Activated CD4-positive, alpha-beta T cell treated with anti-CD3 and anti-CD28 coated beads for 36 hours (primary cell): ENCODE measurements at regions of chr20 and their contacts with region 1.

Region 1: GRCh38 chr20:2101865-2102584 is 398 bp downstream of the STK35 start:
- DNase-seq: peak; percentile 93
- ATAC-seq: peak; percentile 83
- H3K4me3 Mint-ChIP-seq: peak overlapping the region; percentile 81
- H3K27ac Mint-ChIP-seq: peak overlapping the region; percentile 100
- H3K4me1 Mint-ChIP-seq: peaks cover 37% of the 10 kb centered on the region
- H3K27me3 Mint-ChIP-seq: no peaks in the 10 kb centered on the region

Region 2: GRCh38 chr20:407133-407952 is 1694.7 kb before region 1 on chr20:
- CTCF ChIA-PET with region 1: no interaction called
- POLR2A ChIA-PET with region 1: no interaction called
- intact Hi-C with region 1: loop called in 1 of 2 experiments (anchors 5 kb)
- DNase-seq: peak; percentile 87
- ATAC-seq: peak; percentile 74
- H3K4me3 Mint-ChIP-seq: peak overlapping the region; percentile 78
- H3K27ac Mint-ChIP-seq: peak overlapping the region; percentile 87
- H3K4me1 Mint-ChIP-seq: peaks cover 43% of the 10 kb centered on the region
- H3K27me3 Mint-ChIP-seq: no peaks in the 10 kb centered on the region

Region 3: GRCh38 chr20:1325173-1326030 is 776.6 kb before region 1 on chr20:
- CTCF ChIA-PET with region 1: no interaction called
- POLR2A ChIA-PET with region 1: no interaction called
- intact Hi-C with region 1: loop called in 1 of 2 experiments (anchors 1 kb)
- DNase-seq: peak; percentile 99
- ATAC-seq: peak; percentile 83
- H3K4me3 Mint-ChIP-seq: no peak overlapping the region
- H3K27ac Mint-ChIP-seq: no peak overlapping the region
- H3K4me1 Mint-ChIP-seq: peaks cover 28% of the 10 kb centered on the region
- H3K27me3 Mint-ChIP-seq: no peaks in the 10 kb centered on the region

Region 4: GRCh38 chr20:1663917-1664316 is 438.1 kb before region 1 on chr20:
- CTCF ChIA-PET with region 1: no interaction called
- POLR2A ChIA-PET with region 1: no interaction called
- intact Hi-C with region 1: loop called in 1 of 2 experiments (anchors 5 kb)
- DNase-seq: peak; percentile 46
- ATAC-seq: peak; percentile 55
- H3K4me3 Mint-ChIP-seq: peak overlapping the region; percentile 47
- H3K27ac Mint-ChIP-seq: peak overlapping the region; percentile 98
- H3K4me1 Mint-ChIP-seq: peaks cover 96% of the 10 kb centered on the region
- H3K27me3 Mint-ChIP-seq: no peaks in the 10 kb centered on the region

Region 5: GRCh38 chr20:2172305-2173175 is 70.5 kb after region 1 on chr20:
- CTCF ChIA-PET with region 1: interaction called, 4 read pairs
- POLR2A ChIA-PET with region 1: interaction called, 3 read pairs
- intact Hi-C with region 1: loop called in 1 of 2 experiments (anchors 2 kb)
- DNase-seq: peak; percentile 82
- ATAC-seq: peak; percentile 72
- H3K4me3 Mint-ChIP-seq: peak overlapping the region; percentile 2
- H3K27ac Mint-ChIP-seq: no peak overlapping the region
- H3K4me1 Mint-ChIP-seq: peaks cover 2% of the 10 kb centered on the region
- H3K27me3 Mint-ChIP-seq: peaks cover 11% of the 10 kb centered on the region

Region 6: DNA sequence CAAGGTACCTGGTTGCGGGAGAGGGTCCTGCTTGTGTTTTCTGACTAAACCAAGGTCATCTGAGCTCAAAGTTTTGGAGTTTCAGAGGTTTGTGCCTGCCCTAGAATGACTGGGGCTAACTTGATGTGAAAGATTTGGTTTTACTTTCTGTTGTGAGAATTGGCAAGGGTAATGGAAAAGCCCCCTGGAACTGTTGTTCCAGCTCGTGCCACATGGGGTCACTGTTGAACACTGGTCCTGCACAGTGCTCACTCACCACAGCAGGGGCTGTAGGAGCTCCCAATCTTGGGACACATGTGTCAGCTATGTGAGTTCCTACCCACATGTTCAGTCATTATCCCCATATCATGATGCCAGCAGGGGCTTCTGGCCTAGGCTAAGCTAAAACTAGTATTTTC is 285.2 kb after region 1 on chr20:
- CTCF ChIA-PET with region 1: no interaction called
- POLR2A ChIA-PET with region 1: no interaction called
- intact Hi-C with region 1: no loop called
- DNase-seq: peak; percentile 82
- ATAC-seq: peak; percentile 90
- H3K4me3 Mint-ChIP-seq: no peak overlapping the region
- H3K27ac Mint-ChIP-seq: no peak overlapping the region
- H3K4me1 Mint-ChIP-seq: peaks cover 3% of the 10 kb centered on the region
- H3K27me3 Mint-ChIP-seq: peaks cover 10% of the 10 kb centered on the region

Region 7: DNA sequence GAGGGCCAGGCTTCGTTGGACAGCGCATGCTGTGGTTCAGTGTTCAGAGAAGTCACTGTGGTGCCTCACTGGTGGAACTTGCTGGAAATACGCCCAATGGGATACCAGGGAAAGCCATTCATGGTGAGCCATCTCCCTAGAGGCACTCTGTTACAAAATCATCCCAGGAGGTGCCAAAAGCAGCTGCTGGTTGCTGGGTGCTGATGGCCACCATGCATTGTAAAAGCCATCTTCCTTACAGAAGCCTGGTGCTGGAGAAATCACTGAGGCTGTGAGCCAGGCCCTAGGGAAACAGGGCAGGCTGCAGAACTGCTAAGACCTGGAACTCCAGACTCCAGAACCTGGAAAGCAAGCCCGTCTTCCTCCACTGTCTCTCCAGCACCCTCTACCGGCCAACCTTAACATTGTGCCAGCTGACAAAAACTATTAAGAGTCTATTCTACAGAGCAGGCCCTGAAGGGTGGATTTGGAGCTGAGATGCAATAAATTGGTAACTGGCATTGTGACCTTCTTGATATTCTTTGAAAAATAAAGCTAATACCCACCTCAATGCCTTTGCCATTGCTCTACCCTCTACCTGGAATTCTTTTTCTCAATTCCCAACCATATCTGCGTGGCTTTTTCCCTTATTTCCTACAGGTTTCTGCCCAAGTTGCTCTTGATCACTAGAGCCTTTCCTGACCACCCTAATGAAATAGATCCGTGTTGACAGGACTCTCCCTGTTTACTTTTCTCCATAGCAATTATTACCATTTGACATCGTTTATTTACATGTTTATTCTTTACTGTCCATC is 350.1 kb after region 1 on chr20:
- CTCF ChIA-PET with region 1: no interaction called
- POLR2A ChIA-PET with region 1: no interaction called
- intact Hi-C with region 1: loop called in 1 of 2 experiments (anchors 5 kb)
- DNase-seq: peak; percentile 85
- ATAC-seq: peak; percentile 58
- H3K4me3 Mint-ChIP-seq: no peak overlapping the region
- H3K27ac Mint-ChIP-seq: no peak overlapping the region
- H3K4me1 Mint-ChIP-seq: peaks cover 45% of the 10 kb centered on the region
- H3K27me3 Mint-ChIP-seq: no peaks in the 10 kb centered on the region

Region 8: DNA sequence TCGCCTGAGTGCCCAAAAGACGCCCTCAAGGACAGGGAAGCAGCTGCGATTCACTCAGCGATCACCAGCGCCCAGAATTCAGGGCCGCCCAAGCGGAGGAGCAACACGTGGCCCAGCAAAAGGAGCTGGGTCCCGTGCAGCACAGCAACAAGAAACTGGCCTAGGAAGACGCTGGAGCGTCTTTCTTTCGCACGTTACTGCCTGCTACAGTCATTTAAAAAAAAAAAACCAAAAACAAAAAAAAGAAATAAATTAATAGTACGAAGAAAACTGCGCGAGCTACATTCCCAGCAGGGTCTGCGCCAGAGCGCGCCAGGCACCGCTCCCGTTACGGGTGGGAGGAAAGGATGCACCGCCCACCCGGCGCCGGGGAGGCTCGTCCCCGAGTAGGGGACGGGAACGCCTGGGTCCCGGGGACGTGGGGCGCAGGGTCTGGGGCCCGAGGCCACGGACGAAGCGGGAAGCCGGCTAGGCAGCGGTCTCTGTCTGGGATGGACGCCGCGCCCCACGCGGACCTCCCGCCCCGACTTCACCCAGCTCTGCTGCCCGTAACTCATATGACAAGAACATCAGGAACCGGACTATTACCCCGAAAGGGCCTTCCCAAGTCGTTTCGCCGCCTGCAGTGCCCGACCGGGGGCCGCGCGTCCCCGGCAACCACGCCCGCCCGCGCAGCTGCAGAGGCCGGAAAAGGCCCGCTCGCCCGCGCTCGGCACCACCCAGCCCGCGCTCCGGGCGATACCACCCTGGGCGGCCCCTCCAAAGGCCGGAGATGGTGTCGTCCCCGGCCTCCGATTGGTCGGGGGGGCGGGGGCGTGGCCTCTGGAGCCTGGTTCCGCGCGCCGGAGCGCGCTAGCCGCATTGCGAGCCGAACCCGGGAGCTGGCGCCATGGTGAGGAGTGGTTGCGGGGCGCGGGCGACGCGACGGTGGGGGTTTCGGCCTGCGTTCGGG is 550.0 kb after region 1 on chr20 and contains the start of gene NOP56:
- CTCF ChIA-PET with region 1: no interaction called
- POLR2A ChIA-PET with region 1: no interaction called
- intact Hi-C with region 1: loop called in 1 of 2 experiments (anchors 1 kb)
- DNase-seq: peak; percentile 95
- ATAC-seq: peak; percentile 84
- H3K4me3 Mint-ChIP-seq: peak within 1 kb of the TSS; percentile 87
- H3K27ac Mint-ChIP-seq: peak within 1 kb of the TSS; percentile 90
- H3K4me1 Mint-ChIP-seq: peaks cover 40% of the 10 kb centered on the region
- H3K27me3 Mint-ChIP-seq: no peaks in the 10 kb centered on the region
- total RNA-seq, gene NOP56: 504 to 532 TPM

Region 9: GRCh38 chr20:3068986-3069900 is 967.2 kb after region 1 on chr20:
- CTCF ChIA-PET with region 1: no interaction called
- POLR2A ChIA-PET with region 1: no interaction called
- intact Hi-C with region 1: no loop called
- DNase-seq: peak; percentile 68
- ATAC-seq: peak; percentile 46
- H3K4me3 Mint-ChIP-seq: no peak overlapping the region
- H3K27ac Mint-ChIP-seq: no peak overlapping the region
- H3K4me1 Mint-ChIP-seq: peaks cover 25% of the 10 kb centered on the region
- H3K27me3 Mint-ChIP-seq: no peaks in the 10 kb centered on the region